ENCODE measurements at regions of chr14 and their contacts with region 1.

Region 1: DNA sequence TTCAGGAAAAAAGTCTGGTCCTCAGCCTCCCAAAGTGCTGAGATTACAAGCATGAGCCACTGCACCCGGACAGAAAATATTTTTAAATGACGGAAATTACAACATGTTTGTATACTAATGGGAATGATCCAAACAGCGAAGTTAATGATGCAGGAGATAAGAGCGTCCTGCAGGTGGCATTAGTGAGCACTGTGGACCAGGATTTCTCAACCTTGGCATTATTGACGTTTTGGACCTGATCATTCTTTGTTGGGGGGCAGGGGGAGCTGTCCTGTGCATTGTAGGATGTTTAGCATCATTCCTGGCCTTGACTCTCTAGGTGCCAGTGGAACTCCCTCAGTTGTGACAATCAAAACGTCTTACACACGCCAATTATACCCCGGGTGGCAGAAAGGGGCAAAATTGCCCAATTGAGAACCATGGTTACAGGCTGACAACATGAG is 34.1 kb downstream of the SCFD1 start:
- DNase-seq: peak; percentile 35
- H3K4me3 ChIP-seq: no peak overlapping the region
- H3K27ac ChIP-seq: no peak overlapping the region
- H3K4me1 ChIP-seq: no peaks in the 10 kb centered on the region
- H3K27me3 ChIP-seq: no peaks in the 10 kb centered on the region
- CTCF ChIP-seq: peak; percentile 62 to 63
- POLR2A ChIP-seq: no peak

Region 2: DNA sequence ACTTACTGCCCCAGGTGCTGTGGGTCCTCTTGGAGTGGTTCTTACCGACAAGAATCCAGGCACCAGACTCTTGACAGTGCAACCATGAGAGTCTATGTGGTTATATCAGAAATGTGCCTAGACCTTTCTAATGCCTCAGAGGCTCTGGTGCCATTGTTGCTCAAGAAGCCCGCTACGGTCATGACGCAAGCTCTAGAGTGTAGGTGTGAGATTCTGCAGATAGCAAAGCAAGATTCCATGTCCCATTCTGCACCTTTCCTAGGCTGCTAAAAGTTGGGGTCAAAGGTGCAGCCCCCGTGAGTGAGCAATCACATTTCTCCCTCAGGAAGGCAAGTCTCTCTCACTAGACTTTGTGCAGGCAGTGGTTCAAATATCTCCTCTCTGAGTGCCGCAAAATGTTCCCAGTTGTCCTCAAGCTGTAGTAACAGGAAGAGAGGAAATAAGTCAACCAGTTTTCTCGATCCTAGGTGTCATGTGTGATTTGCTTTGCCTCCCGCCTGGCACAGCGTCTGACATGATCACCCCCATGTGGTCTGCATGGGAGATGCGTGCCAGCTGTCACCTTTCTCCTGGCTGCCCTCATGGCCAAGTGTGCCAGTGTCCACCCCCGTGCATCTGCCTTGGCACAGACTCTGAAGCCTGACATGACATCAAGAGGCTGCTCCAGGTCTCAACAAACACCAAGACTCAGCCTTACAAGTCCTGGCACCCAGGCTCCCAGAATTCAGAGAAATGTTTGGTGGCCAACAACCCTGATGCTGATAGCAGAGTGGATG is 95.6 kb after region 1 on chr14:
- CTCF ChIA-PET with region 1: interaction called, 3 read pairs
- POLR2A ChIA-PET with region 1: no interaction called
- dilution Hi-C with region 1: no loop called
- intact Hi-C with region 1: loop called (anchors 1 kb)
- DNase-seq: no peak
- H3K4me3 ChIP-seq: no peak overlapping the region
- H3K27ac ChIP-seq: no peak overlapping the region
- H3K4me1 ChIP-seq: no peaks in the 10 kb centered on the region
- H3K27me3 ChIP-seq: peaks cover 0 to 13% of the 10 kb centered on the region in 2 experiments
- CTCF ChIP-seq: no peak
- POLR2A ChIP-seq: no peak

Region 3: GRCh38 chr14:30906752-30907658 is 250.8 kb after region 1 on chr14:
- CTCF ChIA-PET with region 1: interaction called, 4 read pairs
- POLR2A ChIA-PET with region 1: no interaction called
- dilution Hi-C with region 1: no loop called
- intact Hi-C with region 1: loop called (anchors 1 kb)
- DNase-seq: peak; percentile 40
- H3K4me3 ChIP-seq: no peak overlapping the region
- H3K27ac ChIP-seq: no peak overlapping the region
- H3K4me1 ChIP-seq: no peaks in the 10 kb centered on the region
- H3K27me3 ChIP-seq: no peaks in the 10 kb centered on the region
- CTCF ChIP-seq: peak in 1 of 2 donors; percentile 6
- POLR2A ChIP-seq: no peak

Region 4: GRCh38 chr14:31084385-31084784 is 428.2 kb after region 1 on chr14:
- CTCF ChIA-PET with region 1: interaction called, 3 read pairs
- POLR2A ChIA-PET with region 1: no interaction called
- dilution Hi-C with region 1: no loop called
- intact Hi-C with region 1: loop called (anchors 10 kb)
- DNase-seq: no peak
- H3K4me3 ChIP-seq: no peak overlapping the region
- H3K27ac ChIP-seq: no peak overlapping the region
- H3K4me1 ChIP-seq: no peaks in the 10 kb centered on the region
- H3K27me3 ChIP-seq: no peaks in the 10 kb centered on the region
- CTCF ChIP-seq: no peak
- POLR2A ChIP-seq: no peak

Measured in endothelial cell of umbilical vein (primary cell).